Activated CD4-positive, alpha-beta memory T cell treated with anti-CD3 and anti-CD28 coated beads, Interleukin-2, amount 10 ng/mL, durations not matched to agents 7 days and 5 days (primary cell): ENCODE measurements at regions of chr16 and their contacts with region 1.

Region 1: GRCh38 chr16:2752035-2752849 is at the start of gene SRRM2:
- DNase-seq: peak; percentile 96
- H3K4me3 Mint-ChIP-seq: peak within 1 kb of the TSS; percentile 81
- H3K27ac Mint-ChIP-seq: peak within 1 kb of the TSS; percentile 99
- H3K4me1 Mint-ChIP-seq: peaks cover 59% of the 10 kb centered on the region
- H3K27me3 Mint-ChIP-seq: no peaks in the 10 kb centered on the region
- total RNA-seq, gene SRRM2: 520 to 539 TPM

Region 2: DNA sequence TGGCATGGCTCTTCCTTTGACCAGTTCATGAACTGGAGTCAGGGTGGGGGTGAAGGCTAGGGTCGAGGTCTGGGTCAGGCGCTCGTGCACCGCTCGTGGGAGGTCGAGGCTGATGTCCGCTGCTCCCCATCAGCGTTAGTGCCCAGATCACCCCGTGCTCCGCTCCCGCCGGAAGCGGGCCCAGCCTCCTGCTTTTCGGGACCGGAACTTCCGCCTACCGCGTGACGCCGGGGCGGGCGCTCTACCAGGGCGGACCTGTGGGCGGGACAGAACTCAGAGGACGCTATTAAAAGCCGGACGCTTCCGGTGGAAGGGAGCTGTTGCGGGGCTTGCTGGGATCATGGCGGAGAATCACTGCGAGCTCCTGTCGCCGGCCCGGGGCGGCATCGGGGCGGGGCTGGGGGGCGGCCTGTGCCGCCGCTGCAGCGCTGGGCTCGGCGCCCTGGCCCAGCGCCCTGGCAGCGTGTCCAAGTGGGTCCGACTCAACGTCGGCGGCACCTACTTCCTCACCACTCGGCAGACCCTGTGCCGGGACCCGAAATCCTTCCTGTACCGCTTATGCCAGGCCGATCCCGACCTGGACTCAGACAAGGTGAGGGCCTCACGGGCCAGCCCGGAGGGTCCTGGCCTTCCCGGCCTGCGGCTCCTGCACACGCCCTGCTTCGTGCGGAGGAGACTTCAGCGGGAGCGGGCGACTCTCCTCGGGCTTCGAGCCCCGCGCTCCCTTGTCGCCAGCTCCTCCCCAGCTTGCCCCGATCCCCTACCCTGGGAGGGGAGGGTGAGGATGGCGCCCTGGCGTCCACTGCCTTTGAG is 69.8 kb before region 1 on chr16 and contains the start of gene KCTD5:
- CTCF ChIA-PET with region 1: interaction called, 3 read pairs
- POLR2A ChIA-PET with region 1: interaction called, 14 read pairs
- DNase-seq: peak; percentile 97
- H3K4me3 Mint-ChIP-seq: peak within 1 kb of the TSS; percentile 97
- H3K27ac Mint-ChIP-seq: peak within 1 kb of the TSS; percentile 85
- H3K4me1 Mint-ChIP-seq: peaks cover 31% of the 10 kb centered on the region
- H3K27me3 Mint-ChIP-seq: no peaks in the 10 kb centered on the region
- total RNA-seq, gene KCTD5: 35.9 to 39.8 TPM

Region 3: GRCh38 chr16:2739625-2740435 is 12.4 kb before region 1 on chr16:
- CTCF ChIA-PET with region 1: no interaction called
- POLR2A ChIA-PET with region 1: interaction called, 15 read pairs
- DNase-seq: no peak
- H3K4me3 Mint-ChIP-seq: no peak overlapping the region
- H3K27ac Mint-ChIP-seq: no peak overlapping the region
- H3K4me1 Mint-ChIP-seq: peaks cover 5% of the 10 kb centered on the region
- H3K27me3 Mint-ChIP-seq: no peaks in the 10 kb centered on the region

Region 4: GRCh38 chr16:2764718-2765117 is 12.5 kb after region 1 on chr16:
- CTCF ChIA-PET with region 1: no interaction called
- POLR2A ChIA-PET with region 1: interaction called, 30 read pairs
- DNase-seq: no peak
- H3K4me3 Mint-ChIP-seq: no peak overlapping the region
- H3K27ac Mint-ChIP-seq: no peak overlapping the region
- H3K4me1 Mint-ChIP-seq: peaks cover 12% of the 10 kb centered on the region
- H3K27me3 Mint-ChIP-seq: no peaks in the 10 kb centered on the region

Region 5: GRCh38 chr16:2770057-2770951 is 18.1 kb after region 1 on chr16:
- CTCF ChIA-PET with region 1: no interaction called
- POLR2A ChIA-PET with region 1: interaction called, 114 read pairs
- DNase-seq: peak; percentile 35
- H3K4me3 Mint-ChIP-seq: no peak overlapping the region
- H3K27ac Mint-ChIP-seq: peak overlapping the region; percentile 31
- H3K4me1 Mint-ChIP-seq: peaks cover 20% of the 10 kb centered on the region
- H3K27me3 Mint-ChIP-seq: no peaks in the 10 kb centered on the region

Region 6: DNA sequence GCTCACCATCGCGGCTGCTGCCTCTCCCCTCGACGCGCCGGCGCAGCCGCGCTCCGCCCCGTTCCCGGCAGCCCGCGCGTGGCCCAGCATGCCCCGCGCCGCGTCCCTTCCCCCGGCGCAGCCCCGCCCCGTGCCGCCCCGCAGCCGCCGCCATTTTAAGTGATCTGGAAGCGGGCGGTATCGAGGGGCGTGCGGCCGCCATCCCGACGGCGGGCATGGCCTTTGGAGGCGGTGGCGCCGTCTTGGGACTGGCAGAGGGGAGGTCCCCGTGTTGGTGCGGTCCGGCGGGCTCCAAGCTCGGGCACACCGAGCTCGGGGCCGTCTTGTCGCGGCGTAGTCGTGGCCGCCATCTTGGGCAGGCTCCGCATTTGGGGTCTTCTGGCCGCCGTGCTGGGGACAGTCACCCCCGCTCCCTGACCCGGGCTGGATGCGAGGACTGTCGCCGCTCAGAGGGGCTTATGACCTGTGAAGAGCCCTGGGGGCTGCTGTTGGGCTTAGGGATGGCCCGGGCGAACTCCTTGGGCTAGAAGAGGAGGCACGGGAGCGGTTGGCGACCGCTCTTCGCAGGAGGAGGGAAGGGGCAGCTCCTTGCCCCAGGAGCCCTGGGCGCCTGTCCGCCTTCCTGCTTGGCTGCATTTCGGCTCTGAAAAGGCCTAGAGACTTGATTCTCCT is 25.1 kb after region 1 on chr16 and contains the start of gene ELOB:
- CTCF ChIA-PET with region 1: no interaction called
- POLR2A ChIA-PET with region 1: interaction called, 114 read pairs
- DNase-seq: peak; percentile 92
- H3K4me3 Mint-ChIP-seq: peak within 1 kb of the TSS; percentile 88
- H3K27ac Mint-ChIP-seq: peak within 1 kb of the TSS; percentile 96
- H3K4me1 Mint-ChIP-seq: peaks cover 25% of the 10 kb centered on the region
- H3K27me3 Mint-ChIP-seq: no peaks in the 10 kb centered on the region
- total RNA-seq, gene ELOB: 141 to 150 TPM